AG04450 (cell line): ENCODE measurements at regions of chr11 and their contacts with region 1.

Region 1: DNA sequence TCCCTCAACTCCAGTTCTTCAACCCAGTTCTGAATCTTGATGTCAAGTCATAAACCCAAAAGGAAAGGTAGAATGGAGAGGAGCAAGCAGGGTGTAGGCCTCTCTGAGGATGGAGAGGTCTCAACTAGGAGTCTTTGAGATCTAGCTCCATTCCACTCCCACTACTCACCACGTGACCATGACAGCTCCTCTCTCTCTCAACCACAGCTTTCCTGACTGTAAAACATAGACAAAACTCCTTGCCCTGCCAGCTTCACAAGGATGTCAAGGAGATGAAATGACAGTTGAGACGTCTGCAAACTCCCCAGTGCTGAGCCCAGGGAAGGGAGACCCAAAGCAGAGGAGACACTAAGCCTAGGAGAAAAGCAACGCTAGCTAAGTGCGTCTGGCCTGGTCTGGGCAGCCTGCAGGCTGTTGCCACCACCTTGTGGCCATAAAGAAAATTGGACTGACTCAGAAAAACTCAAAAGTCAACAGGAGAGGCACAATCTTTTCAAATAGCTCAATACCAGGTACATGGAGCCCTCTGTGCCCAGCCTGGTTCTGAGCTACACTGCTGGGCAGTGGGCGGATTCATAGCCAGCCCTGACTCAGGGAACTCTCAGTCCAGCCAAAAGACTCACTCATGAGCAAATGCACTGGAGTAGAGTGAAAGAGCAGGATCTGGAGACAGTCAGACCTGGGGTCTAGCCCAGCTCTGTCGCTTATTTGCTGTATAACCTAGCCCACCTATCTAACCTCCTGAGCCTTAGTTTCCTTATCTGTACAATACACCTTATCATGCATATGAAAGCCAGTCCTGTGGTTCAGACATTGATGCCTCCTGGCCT is 3.4 kb downstream of the CLPB start:
- DNase-seq: peak; percentile 18
- H3K4me3 ChIP-seq: no peak overlapping the region
- H3K27ac ChIP-seq: no peak overlapping the region
- H3K27me3 ChIP-seq: no peaks in the 10 kb centered on the region
- CTCF ChIP-seq: peak; percentile 86

Region 2: GRCh38 chr11:71986131-71986530 is 444.8 kb before region 1 on chr11:
- CTCF ChIA-PET with region 1: interaction called, 10 read pairs
- POLR2A ChIA-PET with region 1: no interaction called
- DNase-seq: no peak
- H3K4me3 ChIP-seq: no peak overlapping the region
- H3K27ac ChIP-seq: no peak overlapping the region
- H3K27me3 ChIP-seq: no peaks in the 10 kb centered on the region
- CTCF ChIP-seq: no peak

Region 3: DNA sequence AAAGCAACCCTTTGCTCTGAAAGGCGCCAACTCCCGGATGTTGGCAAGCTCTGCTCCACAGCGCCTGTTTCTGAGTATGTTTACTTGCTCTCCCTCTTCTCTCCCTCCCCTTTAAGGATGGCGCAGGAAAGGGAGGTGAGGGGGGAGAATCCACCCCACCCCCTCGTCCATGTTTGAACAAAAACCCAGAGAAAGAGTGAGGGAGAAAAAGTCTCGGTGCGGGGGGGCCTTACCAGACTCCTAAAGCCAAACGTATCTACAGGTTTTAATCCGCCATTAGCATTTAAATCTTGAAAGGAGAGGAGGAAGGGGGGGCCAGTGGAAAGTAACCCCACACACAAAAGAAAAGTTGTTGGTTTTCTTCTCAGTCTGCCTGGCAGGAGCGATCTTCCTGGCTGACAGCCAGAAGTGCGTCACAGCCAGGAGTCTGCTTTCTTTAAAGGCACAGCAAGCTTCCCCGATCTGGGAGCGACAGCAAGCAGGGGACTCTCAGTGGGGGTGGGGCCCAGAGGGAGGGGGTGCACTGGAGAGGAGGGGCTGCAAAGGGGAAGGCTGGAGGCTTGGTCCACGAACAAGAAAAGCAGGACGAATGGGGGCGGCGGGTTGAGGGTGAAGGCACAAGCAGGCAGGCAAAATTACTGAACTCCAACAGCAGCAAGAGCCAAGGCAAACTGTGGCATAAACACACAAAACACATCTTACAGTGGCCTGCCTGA is 390.1 kb before region 1 on chr11:
- CTCF ChIA-PET with region 1: interaction called, 19 read pairs
- POLR2A ChIA-PET with region 1: no interaction called
- DNase-seq: peak; percentile 89
- H3K4me3 ChIP-seq: peak overlapping the region; percentile 88
- H3K27ac ChIP-seq: peak overlapping the region; percentile 99
- H3K27me3 ChIP-seq: no peaks in the 10 kb centered on the region
- CTCF ChIP-seq: no peak

Region 4: GRCh38 chr11:72189461-72190275 is 241.3 kb before region 1 on chr11:
- CTCF ChIA-PET with region 1: interaction called, 39 read pairs
- POLR2A ChIA-PET with region 1: no interaction called
- DNase-seq: no peak
- H3K4me3 ChIP-seq: no peak overlapping the region
- H3K27ac ChIP-seq: no peak overlapping the region
- H3K27me3 ChIP-seq: no peaks in the 10 kb centered on the region
- CTCF ChIP-seq: no peak

Region 5: GRCh38 chr11:72244361-72245262 is 186.3 kb before region 1 on chr11:
- CTCF ChIA-PET with region 1: interaction called, 34 read pairs
- POLR2A ChIA-PET with region 1: no interaction called
- DNase-seq: no peak
- H3K4me3 ChIP-seq: peak overlapping the region; percentile 25
- H3K27ac ChIP-seq: no peak overlapping the region
- H3K27me3 ChIP-seq: peaks cover 79% of the 10 kb centered on the region
- CTCF ChIP-seq: no peak

Region 6: GRCh38 chr11:72413914-72414628 is 16.9 kb before region 1 on chr11:
- CTCF ChIA-PET with region 1: interaction called, 41 read pairs
- POLR2A ChIA-PET with region 1: no interaction called
- DNase-seq: peak; percentile 51
- H3K4me3 ChIP-seq: no peak overlapping the region
- H3K27ac ChIP-seq: no peak overlapping the region
- H3K27me3 ChIP-seq: no peaks in the 10 kb centered on the region
- CTCF ChIP-seq: peak; percentile 78